Aorta (tissue), 5 donors: ENCODE measurements at regions of chr11 and their contacts with region 1.

Region 1: DNA sequence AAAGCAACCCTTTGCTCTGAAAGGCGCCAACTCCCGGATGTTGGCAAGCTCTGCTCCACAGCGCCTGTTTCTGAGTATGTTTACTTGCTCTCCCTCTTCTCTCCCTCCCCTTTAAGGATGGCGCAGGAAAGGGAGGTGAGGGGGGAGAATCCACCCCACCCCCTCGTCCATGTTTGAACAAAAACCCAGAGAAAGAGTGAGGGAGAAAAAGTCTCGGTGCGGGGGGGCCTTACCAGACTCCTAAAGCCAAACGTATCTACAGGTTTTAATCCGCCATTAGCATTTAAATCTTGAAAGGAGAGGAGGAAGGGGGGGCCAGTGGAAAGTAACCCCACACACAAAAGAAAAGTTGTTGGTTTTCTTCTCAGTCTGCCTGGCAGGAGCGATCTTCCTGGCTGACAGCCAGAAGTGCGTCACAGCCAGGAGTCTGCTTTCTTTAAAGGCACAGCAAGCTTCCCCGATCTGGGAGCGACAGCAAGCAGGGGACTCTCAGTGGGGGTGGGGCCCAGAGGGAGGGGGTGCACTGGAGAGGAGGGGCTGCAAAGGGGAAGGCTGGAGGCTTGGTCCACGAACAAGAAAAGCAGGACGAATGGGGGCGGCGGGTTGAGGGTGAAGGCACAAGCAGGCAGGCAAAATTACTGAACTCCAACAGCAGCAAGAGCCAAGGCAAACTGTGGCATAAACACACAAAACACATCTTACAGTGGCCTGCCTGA is 39.5 kb downstream of the NUMA1 start:
- DNase-seq: peak; percentile 98
- ATAC-seq: peak; percentile 92
- H3K4me3 ChIP-seq: peak overlapping the region; percentile 30 to 82
- H3K27ac ChIP-seq: peak overlapping the region; percentile 46 to 91
- H3K4me1 ChIP-seq: peaks cover 12 to 13% of the 10 kb centered on the region in 2 donors
- H3K27me3 ChIP-seq: no peaks in the 10 kb centered on the region

Region 2: GRCh38 chr11:72075109-72075508 is 34.2 kb after region 1 on chr11:
- intact Hi-C with region 1: loop called (anchors 1 to 5 kb)
- DNase-seq: peak in 1 of 2 donors; percentile 57
- ATAC-seq: no peak
- H3K4me3 ChIP-seq: no peak overlapping the region
- H3K27ac ChIP-seq: no peak overlapping the region
- H3K4me1 ChIP-seq: no peaks in the 10 kb centered on the region
- H3K27me3 ChIP-seq: no peaks in the 10 kb centered on the region

Region 3: DNA sequence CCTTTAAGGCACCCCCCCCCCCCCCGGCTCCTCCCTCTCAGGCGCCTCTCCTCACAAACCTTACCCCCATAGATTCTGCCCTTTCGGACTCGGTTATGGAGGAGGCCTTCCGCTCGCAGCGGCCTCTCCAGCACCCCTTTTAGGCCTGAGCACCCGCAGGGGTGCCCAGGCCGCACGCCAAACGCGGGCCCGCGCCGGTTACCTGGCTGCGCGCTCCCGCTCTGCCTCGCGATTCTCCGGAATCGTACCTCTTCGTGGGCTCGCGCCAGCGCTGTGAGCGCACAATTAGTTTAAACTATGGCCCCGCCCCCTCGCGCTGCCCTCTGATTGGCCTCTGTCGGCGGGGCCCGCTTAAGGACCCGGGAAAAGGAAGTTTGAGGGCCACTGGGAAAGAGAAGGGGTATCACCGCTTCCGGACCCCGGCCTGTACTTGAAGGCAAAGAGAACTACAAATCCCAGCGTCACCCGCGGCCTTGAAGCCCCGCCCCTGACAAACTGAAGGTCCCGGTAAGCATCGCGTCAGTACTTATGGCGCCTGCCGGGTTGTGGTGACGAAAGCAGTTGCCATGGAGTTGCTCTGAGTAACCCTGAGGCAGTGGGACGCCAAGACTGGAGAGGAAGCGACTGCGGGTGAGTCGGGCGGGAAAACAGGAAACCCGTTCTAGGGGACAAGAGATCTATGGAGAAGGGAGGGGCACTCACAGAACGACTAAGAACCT is 39.5 kb after region 1 on chr11 and contains the starts of genes LRRC51 and NUMA1:
- intact Hi-C with region 1: loop called (anchors 1 to 5 kb)
- DNase-seq: peak; percentile 99 to 100
- ATAC-seq: peak; percentile 99
- H3K4me3 ChIP-seq: peak within 1 kb of the TSS; percentile 62 to 96
- H3K27ac ChIP-seq: peak within 1 kb of the TSS; percentile 7 to 88
- H3K4me1 ChIP-seq: no peaks in the 10 kb centered on the region
- H3K27me3 ChIP-seq: no peaks in the 10 kb centered on the region
- total RNA-seq, gene LRRC51: 6.6 to 8.5 TPM
- total RNA-seq, gene NUMA1: 150 to 241 TPM

Region 4: DNA sequence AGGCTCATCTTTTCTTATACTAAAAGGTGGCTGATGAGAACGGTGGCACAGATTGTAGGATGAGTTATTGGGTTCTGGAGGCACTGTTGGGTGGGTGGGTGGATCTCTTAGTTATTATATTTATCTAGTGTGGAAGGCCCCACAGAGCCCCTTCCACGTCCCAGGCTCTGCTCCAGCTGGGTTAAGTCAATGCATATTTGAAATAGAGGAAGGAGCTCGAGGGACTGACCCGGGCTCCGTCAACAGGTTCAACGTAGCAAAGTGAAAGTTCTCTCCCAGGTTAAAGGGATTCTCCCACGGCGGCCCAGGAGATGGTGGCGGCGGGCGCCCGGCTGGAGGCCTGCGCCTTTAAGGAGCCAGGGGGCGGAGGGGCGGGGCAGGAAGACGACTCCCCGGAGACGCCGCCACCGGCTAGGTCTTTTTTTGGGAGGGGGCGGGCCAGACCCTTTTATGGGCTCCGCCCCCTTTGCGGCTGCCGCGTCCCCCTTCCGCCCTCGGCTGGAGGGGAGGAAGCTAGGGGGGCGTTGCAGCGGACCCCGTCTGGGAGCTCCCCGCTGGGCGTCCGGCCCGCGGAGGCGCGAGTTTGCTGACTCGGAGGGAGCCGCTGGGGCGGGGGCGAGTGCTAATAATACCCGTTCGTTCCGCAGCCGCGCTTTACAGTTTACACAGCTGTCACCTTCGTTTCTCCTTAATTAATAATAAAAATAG is 182.2 kb after region 1 on chr11:
- intact Hi-C with region 1: loop called in 1 of 2 experiments (anchors 2 kb)
- DNase-seq: peak; percentile 97
- ATAC-seq: peak; percentile 94
- H3K4me3 ChIP-seq: peak overlapping the region; percentile 91 to 98
- H3K27ac ChIP-seq: peak overlapping the region; percentile 85 to 89
- H3K4me1 ChIP-seq: no peaks in the 10 kb centered on the region
- H3K27me3 ChIP-seq: no peaks in the 10 kb centered on the region